ENCODE measurements at regions of chr9 and their contacts with region 1.

Region 1: DNA sequence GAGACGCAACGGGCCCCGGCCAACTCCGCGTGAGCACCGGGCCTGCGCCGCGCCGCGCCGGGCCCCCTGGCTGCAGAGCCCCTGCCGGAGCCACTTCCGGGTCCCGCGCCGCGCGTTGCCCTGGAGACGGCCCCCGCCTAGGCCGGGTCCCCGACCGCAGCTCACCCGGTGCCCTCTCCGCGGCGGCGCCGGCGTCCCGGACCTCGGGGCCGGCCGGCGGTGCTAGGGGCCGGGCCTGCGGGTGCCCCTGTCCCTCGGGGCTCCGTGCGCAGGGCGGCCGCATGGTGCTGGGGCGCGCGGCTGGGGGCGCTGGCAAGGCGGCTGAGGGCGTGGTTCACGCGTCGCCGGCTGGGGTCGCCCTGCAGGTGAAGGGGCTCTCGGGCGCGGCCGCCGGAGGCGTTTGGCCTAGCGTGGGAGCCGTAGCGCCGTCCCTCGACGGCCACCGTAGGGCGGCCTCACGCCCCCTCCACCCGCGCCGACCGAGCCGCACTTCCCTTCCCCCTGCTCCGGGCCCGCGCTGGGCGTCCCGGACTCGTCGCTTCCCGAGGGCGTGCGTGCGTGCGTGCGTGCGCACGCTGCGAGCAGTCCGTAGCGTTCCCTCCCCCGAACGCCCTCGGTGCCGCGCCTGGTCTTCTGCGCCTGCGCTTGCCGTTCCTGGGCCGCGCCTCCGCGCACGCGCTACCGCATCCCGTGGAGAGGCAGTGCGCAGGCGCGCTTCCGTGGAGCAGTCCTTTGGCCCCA is at the start of gene TMEM250:
- DNase-seq: peak; percentile 99
- H3K4me3 ChIP-seq: peak within 1 kb of the TSS; percentile 82 to 83
- H3K27ac ChIP-seq: peak within 1 kb of the TSS; percentile 58 to 92
- H3K4me1 ChIP-seq: peaks cover 3 to 20% of the 10 kb centered on the region in 2 experiments; a peak in 1 of 4 replicates
- H3K27me3 ChIP-seq: no peaks in the 10 kb centered on the region
- CTCF ChIP-seq: no peak
- EP300 ChIP-seq: no peak
- RAD21 ChIP-seq: no peak
- polyA plus RNA-seq, gene TMEM250: 22.1 and 25.9 TPM in 2 replicates

Region 2: DNA sequence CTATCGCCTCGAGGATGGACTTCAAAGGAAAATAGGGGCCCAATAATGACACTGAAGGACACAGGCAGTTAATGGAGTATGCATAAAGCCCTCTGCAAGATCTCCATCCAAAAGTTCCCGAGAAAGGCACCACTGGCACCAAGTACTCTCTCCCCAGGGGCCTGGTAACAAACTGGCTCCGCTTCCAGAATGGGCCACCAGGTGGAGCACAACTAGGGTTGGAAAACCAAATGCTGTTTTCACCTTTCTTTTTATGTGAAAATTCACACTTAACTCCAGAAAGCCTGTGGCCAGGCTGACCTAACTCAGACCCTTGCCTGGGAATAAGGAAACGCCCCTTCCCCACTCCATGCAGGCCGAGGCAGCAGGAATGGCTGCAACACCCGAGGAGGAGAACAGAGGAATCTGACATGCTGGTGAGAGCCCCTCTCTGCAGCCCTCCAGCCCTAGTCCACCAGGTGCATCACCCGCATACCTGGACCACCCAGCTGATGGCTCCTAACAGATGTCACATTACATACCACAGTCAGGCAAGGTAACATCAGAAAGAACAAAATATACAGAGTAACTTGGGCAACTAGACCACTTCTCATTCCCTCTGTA is 253.9 kb before region 1 on chr9:
- CTCF ChIA-PET with region 1: interaction called, 14 read pairs
- POLR2A ChIA-PET with region 1: no interaction called
- DNase-seq: peak; percentile 76
- H3K4me3 ChIP-seq: peak overlapping the region in 1 of 2 experiments; percentile 27; a peak in 1 of 4 replicates
- H3K27ac ChIP-seq: no peak overlapping the region; a peak in 1 of 4 replicates
- H3K4me1 ChIP-seq: peaks cover 0 to 6% of the 10 kb centered on the region in 2 experiments; a peak in 1 of 4 replicates
- H3K27me3 ChIP-seq: no peaks in the 10 kb centered on the region
- CTCF ChIP-seq: peak; percentile 92
- EP300 ChIP-seq: no peak
- RAD21 ChIP-seq: peak; percentile 68

Region 3: GRCh38 chr9:135968083-135968476 is 150.4 kb before region 1 on chr9:
- CTCF ChIA-PET with region 1: interaction called, 174 read pairs
- POLR2A ChIA-PET with region 1: interaction called, 3 read pairs
- DNase-seq: no peak
- H3K4me3 ChIP-seq: no peak overlapping the region
- H3K27ac ChIP-seq: no peak overlapping the region
- H3K4me1 ChIP-seq: peaks cover 4 to 19% of the 10 kb centered on the region in 2 experiments; a peak in 2 of 4 replicates
- H3K27me3 ChIP-seq: no peaks in the 10 kb centered on the region
- CTCF ChIP-seq: no peak
- EP300 ChIP-seq: no peak
- RAD21 ChIP-seq: no peak

Region 4: DNA sequence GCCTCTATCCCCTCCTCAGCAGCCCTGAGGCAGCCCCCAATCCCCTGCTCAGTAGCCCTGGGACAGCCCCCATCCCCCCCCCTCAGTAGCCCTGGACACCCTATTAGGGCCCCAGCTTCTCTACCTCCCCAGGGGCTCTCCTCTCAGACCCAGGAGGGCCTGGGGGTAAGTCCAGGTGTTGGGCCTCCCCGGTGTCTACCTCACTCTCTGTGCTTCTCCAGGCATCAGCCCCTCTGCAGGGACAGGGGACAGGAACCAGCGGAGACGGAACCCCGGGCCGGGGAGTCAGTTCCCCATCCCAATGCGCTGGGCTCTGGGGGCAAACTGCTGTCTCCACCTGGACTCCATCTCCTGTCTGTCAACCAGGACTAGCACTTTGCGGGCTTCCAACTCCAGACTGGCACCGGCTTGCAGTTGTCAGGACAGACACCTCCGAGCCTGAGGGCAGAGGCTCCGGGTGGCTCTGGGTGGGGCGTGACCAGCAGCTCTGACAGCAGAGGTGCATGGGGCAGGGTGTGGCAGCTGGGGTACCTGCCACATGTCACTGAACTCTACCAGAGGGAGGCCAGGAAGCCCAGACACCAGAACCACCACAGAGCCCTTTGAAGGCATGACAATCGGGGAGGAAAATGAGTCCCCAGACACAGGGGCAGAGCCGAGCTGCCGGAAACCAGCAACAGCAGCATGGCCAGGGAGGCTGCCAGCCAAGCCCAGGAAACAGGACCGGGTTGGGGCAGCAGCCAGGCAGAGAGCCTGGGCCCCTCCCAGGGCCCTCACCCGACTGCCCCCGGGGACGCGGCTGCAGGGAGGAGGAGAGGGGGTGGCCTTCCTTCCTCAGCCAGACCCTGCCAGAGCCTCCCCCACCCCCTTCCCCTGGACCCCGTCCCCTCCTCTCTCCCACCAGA is 139.6 kb before region 1 on chr9:
- CTCF ChIA-PET with region 1: interaction called, 18 read pairs
- POLR2A ChIA-PET with region 1: no interaction called
- DNase-seq: peak; percentile 82
- H3K4me3 ChIP-seq: no peak overlapping the region
- H3K27ac ChIP-seq: peak overlapping the region in 1 of 2 experiments; percentile 80; a peak in 2 of 4 replicates
- H3K4me1 ChIP-seq: peaks cover 4 to 42% of the 10 kb centered on the region in 2 experiments; a peak in 2 of 4 replicates
- H3K27me3 ChIP-seq: peaks cover 9% of the 10 kb centered on the region; the same call in 1 of the 2 replicates
- CTCF ChIP-seq: no peak
- EP300 ChIP-seq: no peak
- RAD21 ChIP-seq: no peak

Region 5: GRCh38 chr9:136093995-136094881 is 24.3 kb before region 1 on chr9:
- CTCF ChIA-PET with region 1: interaction called, 37 read pairs
- POLR2A ChIA-PET with region 1: no interaction called
- DNase-seq: peak; percentile 78
- H3K4me3 ChIP-seq: peak overlapping the region; percentile 75 to 78
- H3K27ac ChIP-seq: peak overlapping the region in 1 of 2 experiments; percentile 6; a peak in 2 of 4 replicates
- H3K4me1 ChIP-seq: peaks cover 31 to 32% of the 10 kb centered on the region in 2 experiments; a peak in 3 of 4 replicates
- H3K27me3 ChIP-seq: no peaks in the 10 kb centered on the region
- CTCF ChIP-seq: no peak
- EP300 ChIP-seq: no peak
- RAD21 ChIP-seq: no peak

Region 6: GRCh38 chr9:136138566-136138965 is 20.1 kb after region 1 on chr9:
- CTCF ChIA-PET with region 1: interaction called, 48 read pairs
- POLR2A ChIA-PET with region 1: no interaction called
- DNase-seq: peak; percentile 69
- H3K4me3 ChIP-seq: no peak overlapping the region
- H3K27ac ChIP-seq: no peak overlapping the region
- H3K4me1 ChIP-seq: peaks cover 2 to 11% of the 10 kb centered on the region in 2 experiments; a peak in 2 of 4 replicates
- H3K27me3 ChIP-seq: peaks cover 50% of the 10 kb centered on the region
- CTCF ChIP-seq: peak; percentile 56
- EP300 ChIP-seq: no peak
- RAD21 ChIP-seq: peak; percentile 23; the same call in 1 of the 2 replicates